CD4-positive, alpha-beta memory T cell (primary cell): ENCODE measurements at regions of chr2 and their contacts with region 1.

Region 1: DNA sequence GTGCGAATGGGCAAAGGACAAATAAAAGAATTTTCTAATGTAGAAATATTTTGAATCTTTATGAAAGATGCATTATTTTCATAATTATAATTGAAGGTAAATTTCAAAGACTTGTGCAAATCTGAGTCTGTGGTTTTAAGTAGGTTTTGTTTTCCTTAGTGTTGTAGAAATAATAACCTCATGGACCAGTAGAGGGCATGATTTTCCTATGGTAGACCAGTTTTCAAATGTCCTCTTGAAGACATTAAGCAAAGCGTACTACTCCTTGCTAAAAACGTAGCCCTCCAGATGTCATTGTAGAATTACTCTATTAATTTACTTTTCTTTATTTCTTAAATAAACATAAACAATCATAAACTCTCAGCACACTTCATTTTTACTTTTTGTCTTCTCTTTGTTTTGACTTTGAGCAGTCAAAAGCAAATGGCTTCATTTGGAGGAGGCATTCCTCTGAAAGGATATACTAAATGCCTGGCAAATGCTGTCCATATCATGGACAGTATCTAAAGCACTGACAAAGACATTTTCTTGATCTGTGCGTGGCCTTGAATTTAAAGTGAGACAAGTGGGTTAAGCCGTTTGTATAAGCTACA is 85.8 kb upstream of the FAM237A start:
- DNase-seq: peak in 4 of 5 donors; percentile 34 to 39 (median 37)
- H3K4me3 ChIP-seq: no peak overlapping the region
- H3K4me3 Mint-ChIP-seq: no peak overlapping the region
- H3K27ac ChIP-seq: no peak overlapping the region
- H3K27ac Mint-ChIP-seq: no peak overlapping the region
- H3K4me1 ChIP-seq: peaks cover 31% of the 10 kb centered on the region
- H3K4me1 Mint-ChIP-seq: peaks cover 24 to 35% (median 31%) of the 10 kb centered on the region in 4 donors
- H3K27me3 ChIP-seq: no peaks in the 10 kb centered on the region
- H3K27me3 Mint-ChIP-seq: no peaks in the 10 kb centered on the region

Region 2: GRCh38 chr2:206249714-206250591 is 306.5 kb before region 1 on chr2:
- CTCF ChIA-PET with region 1: no interaction called
- POLR2A ChIA-PET with region 1: no interaction called
- intact Hi-C with region 1: loop called (anchors 5 kb)
- DNase-seq: peak in 1 of 5 donors; percentile 11
- H3K4me3 ChIP-seq: no peak overlapping the region
- H3K4me3 Mint-ChIP-seq: peak overlapping the region; percentile 76 to 92 (median 85)
- H3K27ac ChIP-seq: no peak overlapping the region
- H3K27ac Mint-ChIP-seq: peak overlapping the region in 3 of 7 donors; percentile 23 to 57 (median 53)
- H3K4me1 ChIP-seq: peaks cover 5% of the 10 kb centered on the region
- H3K4me1 Mint-ChIP-seq: peaks cover 5 to 11% (median 8%) of the 10 kb centered on the region in 4 donors
- H3K27me3 ChIP-seq: peaks cover 10% of the 10 kb centered on the region
- H3K27me3 Mint-ChIP-seq: peaks cover 31 to 37% of the 10 kb centered on the region in 2 donors

Region 3: GRCh38 chr2:206442833-206443734 is 113.4 kb before region 1 on chr2 and contains the start of gene ADAM23:
- CTCF ChIA-PET with region 1: no interaction called
- POLR2A ChIA-PET with region 1: no interaction called
- intact Hi-C with region 1: loop called (anchors 5 kb)
- DNase-seq: peak; percentile 47 to 79 (median 54)
- H3K4me3 ChIP-seq: peak within 1 kb of the TSS in 1 of 2 donors; percentile 36
- H3K4me3 Mint-ChIP-seq: peak within 1 kb of the TSS; percentile 76 to 93 (median 88)
- H3K27ac ChIP-seq: no peak within 1 kb of the TSS
- H3K27ac Mint-ChIP-seq: peak within 1 kb of the TSS in 5 of 7 donors; percentile 37 to 87 (median 76)
- H3K4me1 ChIP-seq: peaks cover 13% of the 10 kb centered on the region
- H3K4me1 Mint-ChIP-seq: peaks cover 9 to 28% (median 15%) of the 10 kb centered on the region in 4 donors
- H3K27me3 ChIP-seq: peaks cover 10% of the 10 kb centered on the region
- H3K27me3 Mint-ChIP-seq: peaks cover 40 to 50% of the 10 kb centered on the region in 2 donors
- total RNA-seq, gene ADAM23: 28.1 to 31.3 TPM

Region 4: DNA sequence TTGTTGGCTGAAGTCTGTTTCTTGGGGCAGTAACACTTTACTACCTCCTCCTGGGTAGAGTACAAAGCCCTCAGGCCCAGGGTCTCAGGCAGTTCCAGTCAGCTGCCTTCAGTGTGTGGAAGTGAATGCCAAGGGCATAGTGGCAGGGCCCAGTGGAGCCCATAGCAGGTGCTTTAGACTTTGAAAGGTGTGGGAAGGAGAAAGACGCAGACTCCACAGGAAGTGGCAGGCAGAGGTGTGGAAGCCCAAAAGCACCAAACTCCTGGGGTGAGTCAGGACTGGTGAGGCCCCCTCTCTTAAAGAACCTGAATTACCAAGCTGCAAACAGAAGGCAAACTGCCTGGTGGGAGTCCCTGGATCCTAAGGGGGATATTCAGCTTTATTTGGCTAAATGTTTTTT is 67.8 kb before region 1 on chr2:
- CTCF ChIA-PET with region 1: no interaction called
- POLR2A ChIA-PET with region 1: no interaction called
- intact Hi-C with region 1: no loop called
- DNase-seq: no peak
- H3K4me3 ChIP-seq: no peak overlapping the region
- H3K4me3 Mint-ChIP-seq: no peak overlapping the region
- H3K27ac ChIP-seq: no peak overlapping the region
- H3K27ac Mint-ChIP-seq: no peak overlapping the region
- H3K4me1 ChIP-seq: no peaks in the 10 kb centered on the region
- H3K4me1 Mint-ChIP-seq: peaks cover 0 to 17% (median 1%) of the 10 kb centered on the region in 4 donors
- H3K27me3 ChIP-seq: no peaks in the 10 kb centered on the region
- H3K27me3 Mint-ChIP-seq: peaks cover 2 to 9% of the 10 kb centered on the region in 2 donors

Region 5: DNA sequence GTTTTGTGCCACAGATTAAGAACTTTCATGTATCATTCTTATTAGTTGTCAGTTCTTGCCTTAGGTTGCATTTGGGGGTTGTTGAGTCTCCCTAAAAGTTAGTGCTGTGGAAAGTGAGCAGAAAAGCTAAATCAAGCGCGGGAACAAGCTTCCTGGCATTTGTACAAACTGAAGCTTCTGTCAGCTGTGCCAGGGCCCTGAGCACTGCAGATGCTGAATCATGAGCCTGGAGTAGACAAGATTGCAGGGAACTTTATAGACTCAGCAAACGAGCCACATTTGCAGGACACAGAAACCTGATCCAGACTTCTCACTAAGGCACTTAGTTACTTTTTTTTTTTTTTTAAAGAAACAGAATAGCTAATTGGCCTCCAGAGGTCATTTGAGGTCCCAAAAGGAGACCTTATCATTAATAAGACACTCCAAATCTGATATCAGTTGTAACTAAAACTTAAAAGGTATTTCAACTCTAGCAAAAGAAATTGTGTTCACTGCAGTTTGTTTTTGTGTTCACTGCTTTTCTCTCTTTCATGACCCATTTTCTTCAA is 24.4 kb before region 1 on chr2:
- CTCF ChIA-PET with region 1: interaction called, 5 read pairs
- POLR2A ChIA-PET with region 1: interaction called, 8 read pairs
- intact Hi-C with region 1: loop called (anchors 1 kb)
- DNase-seq: no peak
- H3K4me3 ChIP-seq: no peak overlapping the region
- H3K4me3 Mint-ChIP-seq: peak overlapping the region in 1 of 8 donors; percentile 18
- H3K27ac ChIP-seq: no peak overlapping the region
- H3K27ac Mint-ChIP-seq: peak overlapping the region; percentile 2 to 85 (median 31)
- H3K4me1 ChIP-seq: peaks cover 18% of the 10 kb centered on the region
- H3K4me1 Mint-ChIP-seq: peaks cover 19 to 55% (median 35%) of the 10 kb centered on the region in 4 donors
- H3K27me3 ChIP-seq: no peaks in the 10 kb centered on the region
- H3K27me3 Mint-ChIP-seq: peaks cover 0 to 3% of the 10 kb centered on the region in 2 donors

Region 6: DNA sequence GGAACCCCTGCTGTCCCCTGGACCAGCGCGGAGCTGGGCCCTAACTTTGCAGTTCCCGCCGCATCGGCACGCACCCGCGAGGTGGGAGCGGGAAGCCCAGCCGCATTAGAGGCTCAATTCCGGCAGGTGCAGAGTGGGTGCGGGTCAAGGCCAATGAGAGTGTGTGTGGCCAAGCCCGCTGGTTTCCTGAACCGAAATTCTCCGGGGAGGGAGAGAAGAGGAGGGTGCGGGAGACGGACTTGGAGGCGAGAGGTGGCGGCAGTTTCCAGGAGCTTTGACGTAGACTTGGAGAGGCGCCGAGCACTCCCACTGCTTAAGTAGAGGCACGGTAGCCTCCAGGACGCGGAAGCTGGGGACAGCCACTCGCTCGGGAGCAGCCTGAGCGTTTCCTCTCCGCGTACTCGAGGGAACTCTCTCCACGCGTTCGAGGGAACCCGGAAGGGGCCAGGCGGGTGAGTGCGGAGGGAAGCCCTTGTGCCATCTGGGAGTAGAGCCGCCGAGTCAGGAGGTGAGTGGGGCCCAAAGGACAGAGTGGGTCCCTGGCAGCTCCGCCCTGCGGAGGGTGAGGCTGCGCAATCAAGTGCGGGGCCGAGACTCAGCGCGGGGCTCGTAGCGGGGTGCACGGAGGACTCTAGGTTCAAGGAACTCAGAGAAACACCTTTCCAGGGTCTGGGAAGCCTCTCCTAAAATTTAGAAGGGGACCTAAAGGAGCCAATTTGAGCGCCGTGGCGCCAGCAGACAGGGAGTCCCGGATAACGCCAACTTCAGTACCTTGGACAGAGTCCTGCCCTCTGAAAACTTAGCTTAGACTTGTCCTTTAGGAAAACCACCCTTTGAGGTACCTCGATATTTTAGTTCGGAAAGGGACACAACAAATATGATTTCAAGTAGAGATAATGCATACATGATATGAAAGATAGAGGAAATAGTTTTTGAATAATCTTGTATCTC is 85.9 kb after region 1 on chr2 and contains the start of gene FAM237A:
- CTCF ChIA-PET with region 1: no interaction called
- POLR2A ChIA-PET with region 1: no interaction called
- intact Hi-C with region 1: no loop called
- DNase-seq: peak in 1 of 5 donors; percentile 4
- H3K4me3 ChIP-seq: no peak within 1 kb of the TSS
- H3K4me3 Mint-ChIP-seq: peak within 1 kb of the TSS in 1 of 8 donors; percentile 10
- H3K27ac ChIP-seq: no peak within 1 kb of the TSS
- H3K27ac Mint-ChIP-seq: no peak within 1 kb of the TSS
- H3K4me1 ChIP-seq: no peaks in the 10 kb centered on the region
- H3K4me1 Mint-ChIP-seq: peaks cover 0 to 4% (median 0%) of the 10 kb centered on the region in 4 donors
- H3K27me3 ChIP-seq: peaks cover 10% of the 10 kb centered on the region
- H3K27me3 Mint-ChIP-seq: peaks cover 11 to 15% of the 10 kb centered on the region in 2 donors
- total RNA-seq, gene FAM237A: not detected

Region 7: GRCh38 chr2:206693399-206694137 is 137.1 kb after region 1 on chr2:
- CTCF ChIA-PET with region 1: interaction called, 3 read pairs
- POLR2A ChIA-PET with region 1: no interaction called
- intact Hi-C with region 1: loop called (anchors 5 kb)
- DNase-seq: peak in 4 of 5 donors; percentile 40 to 54 (median 50)
- H3K4me3 ChIP-seq: no peak overlapping the region
- H3K4me3 Mint-ChIP-seq: no peak overlapping the region
- H3K27ac ChIP-seq: no peak overlapping the region
- H3K27ac Mint-ChIP-seq: no peak overlapping the region
- H3K4me1 ChIP-seq: peaks cover 10% of the 10 kb centered on the region
- H3K4me1 Mint-ChIP-seq: peaks cover 0 to 4% (median 4%) of the 10 kb centered on the region in 4 donors
- H3K27me3 ChIP-seq: no peaks in the 10 kb centered on the region
- H3K27me3 Mint-ChIP-seq: peaks cover 2 to 5% of the 10 kb centered on the region in 2 donors

Region 8: DNA sequence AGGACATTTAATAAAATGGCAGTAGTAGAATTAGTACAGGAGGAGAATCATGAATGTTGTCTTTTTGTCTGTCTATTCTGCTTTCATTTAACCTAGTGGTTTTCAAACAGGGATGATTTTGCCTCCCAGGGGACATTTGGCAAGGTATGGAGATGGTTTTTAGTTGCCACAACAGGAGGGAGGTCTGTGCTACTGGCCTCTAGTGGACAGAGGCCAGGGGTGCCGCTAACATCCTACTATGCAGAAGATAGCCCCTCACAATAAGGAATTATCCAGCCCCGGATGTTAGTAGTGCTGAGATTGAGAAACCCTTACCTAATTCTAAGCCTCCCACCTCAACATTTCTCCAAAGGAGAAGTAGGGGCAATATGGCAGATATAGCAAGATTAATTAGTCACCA is 227.3 kb after region 1 on chr2:
- CTCF ChIA-PET with region 1: interaction called, 9 read pairs
- POLR2A ChIA-PET with region 1: no interaction called
- intact Hi-C with region 1: loop called (anchors 1 kb)
- DNase-seq: no peak
- H3K4me3 ChIP-seq: no peak overlapping the region
- H3K4me3 Mint-ChIP-seq: no peak overlapping the region
- H3K27ac ChIP-seq: no peak overlapping the region
- H3K27ac Mint-ChIP-seq: peak overlapping the region in 1 of 7 donors; percentile 17
- H3K4me1 ChIP-seq: no peaks in the 10 kb centered on the region
- H3K4me1 Mint-ChIP-seq: peaks cover 5 to 18% (median 15%) of the 10 kb centered on the region in 4 donors
- H3K27me3 ChIP-seq: no peaks in the 10 kb centered on the region
- H3K27me3 Mint-ChIP-seq: no peaks in the 10 kb centered on the region

Region 9: GRCh38 chr2:206832873-206833272 is 276.4 kb after region 1 on chr2:
- CTCF ChIA-PET with region 1: no interaction called
- POLR2A ChIA-PET with region 1: no interaction called
- intact Hi-C with region 1: no loop called
- DNase-seq: no peak
- H3K4me3 ChIP-seq: no peak overlapping the region
- H3K4me3 Mint-ChIP-seq: no peak overlapping the region
- H3K27ac ChIP-seq: no peak overlapping the region
- H3K27ac Mint-ChIP-seq: no peak overlapping the region
- H3K4me1 ChIP-seq: no peaks in the 10 kb centered on the region
- H3K4me1 Mint-ChIP-seq: peaks cover 0 to 1% (median 0%) of the 10 kb centered on the region in 4 donors
- H3K27me3 ChIP-seq: no peaks in the 10 kb centered on the region
- H3K27me3 Mint-ChIP-seq: no peaks in the 10 kb centered on the region

Region 10: GRCh38 chr2:208040199-208041171 is 1484.0 kb after region 1 on chr2:
- CTCF ChIA-PET with region 1: no interaction called
- POLR2A ChIA-PET with region 1: no interaction called
- intact Hi-C with region 1: loop called (anchors 5 kb)
- DNase-seq: peak; percentile 37 to 58 (median 55)
- H3K4me3 ChIP-seq: no peak overlapping the region
- H3K4me3 Mint-ChIP-seq: no peak overlapping the region
- H3K27ac ChIP-seq: no peak overlapping the region
- H3K27ac Mint-ChIP-seq: peak overlapping the region in 3 of 7 donors; percentile 31 to 42 (median 42)
- H3K4me1 ChIP-seq: no peaks in the 10 kb centered on the region
- H3K4me1 Mint-ChIP-seq: no peaks in the 10 kb centered on the region
- H3K27me3 ChIP-seq: no peaks in the 10 kb centered on the region
- H3K27me3 Mint-ChIP-seq: peaks cover 0 to 2% of the 10 kb centered on the region in 2 donors